Activated CD4-positive, alpha-beta T cell treated with anti-CD3 and anti-CD28 coated beads for 36 hours (primary cell): ENCODE measurements at regions of chr10 and their contacts with region 1.

Region 1: GRCh38 chr10:61896854-61897661 is 4.4 kb upstream of the ARID5B start:
- DNase-seq: peak; percentile 70
- ATAC-seq: peak; percentile 79
- H3K4me3 Mint-ChIP-seq: peak overlapping the region; percentile 94
- H3K27ac Mint-ChIP-seq: peak overlapping the region; percentile 93
- H3K4me1 Mint-ChIP-seq: peaks cover 39% of the 10 kb centered on the region
- H3K27me3 Mint-ChIP-seq: no peaks in the 10 kb centered on the region

Region 2: DNA sequence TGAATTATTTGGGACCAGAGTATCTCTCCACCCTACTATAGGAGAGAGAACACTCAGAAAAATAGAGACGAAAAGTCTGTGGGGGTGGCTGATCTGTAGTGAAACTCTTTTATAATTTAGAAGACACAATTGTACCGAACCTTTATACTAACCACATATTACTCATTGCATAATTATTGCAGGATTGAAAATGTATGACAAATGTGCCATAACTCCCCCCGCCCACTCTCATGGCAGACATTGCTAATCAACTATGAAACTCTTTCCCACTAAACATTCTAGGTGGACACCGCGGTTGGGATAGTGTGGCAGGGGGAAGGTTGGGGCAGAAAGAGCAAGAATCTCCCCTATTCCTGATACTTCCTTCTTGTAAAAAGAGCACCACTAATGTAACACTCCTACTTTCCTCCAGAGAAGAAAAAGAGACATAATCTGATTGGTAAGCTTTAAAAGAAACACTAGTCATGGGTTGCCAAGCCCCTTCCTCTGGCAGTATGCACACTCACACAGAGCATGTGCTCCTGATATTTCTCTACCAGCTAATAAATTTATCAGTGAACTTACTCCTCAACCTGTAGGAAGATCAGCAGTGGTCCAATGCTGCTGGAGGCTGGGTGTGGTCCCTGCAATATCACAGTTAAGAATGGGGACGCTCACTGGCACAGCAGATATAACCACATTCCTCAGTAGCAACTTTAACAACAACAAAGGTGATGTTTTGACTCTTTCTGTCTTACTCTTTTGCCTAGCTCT is 14.3 kb before region 1 on chr10:
- CTCF ChIA-PET with region 1: interaction called, 8 read pairs
- POLR2A ChIA-PET with region 1: interaction called, 4 read pairs
- intact Hi-C with region 1: loop called in 1 of 2 experiments (anchors 2 kb)
- DNase-seq: peak; percentile 86
- ATAC-seq: peak; percentile 96
- H3K4me3 Mint-ChIP-seq: no peak overlapping the region
- H3K27ac Mint-ChIP-seq: peak overlapping the region; percentile 87
- H3K4me1 Mint-ChIP-seq: peaks cover 31% of the 10 kb centered on the region
- H3K27me3 Mint-ChIP-seq: no peaks in the 10 kb centered on the region

Region 3: DNA sequence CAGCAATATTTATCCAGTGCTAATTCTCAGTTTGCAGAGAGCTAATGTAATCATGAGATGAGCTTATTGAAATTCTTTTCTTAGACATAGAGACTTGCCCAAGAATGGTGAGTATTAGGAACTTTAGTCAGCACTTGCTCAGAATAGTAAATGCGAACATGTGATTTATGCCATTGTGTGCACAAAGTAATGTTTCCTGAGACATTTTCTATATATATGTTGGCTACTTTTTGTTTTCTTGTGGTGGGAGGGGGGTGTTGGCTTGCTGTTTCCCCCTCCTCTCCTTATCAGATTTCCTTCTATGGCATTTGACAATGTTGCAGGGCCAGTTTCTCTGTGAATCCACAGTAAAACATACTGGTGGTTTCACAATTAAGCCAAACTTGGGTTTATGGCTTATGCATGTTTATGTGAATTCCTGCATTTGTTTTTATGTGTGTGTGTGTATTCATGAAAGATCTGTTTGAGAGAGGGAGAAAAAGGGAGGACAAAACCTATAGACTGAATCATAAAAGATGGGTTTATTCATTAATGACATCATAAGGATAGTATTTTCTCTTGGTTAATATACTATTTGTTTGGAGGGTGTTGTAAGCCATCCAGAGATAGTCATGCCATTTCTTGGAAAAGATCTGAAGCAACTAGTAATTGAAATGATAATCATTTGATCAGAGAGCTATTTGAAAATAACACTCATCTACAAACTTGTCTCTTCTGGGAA is 40.7 kb after region 1 on chr10:
- CTCF ChIA-PET with region 1: interaction called, 7 read pairs
- POLR2A ChIA-PET with region 1: interaction called, 21 read pairs
- intact Hi-C with region 1: no loop called
- DNase-seq: no peak
- ATAC-seq: peak; percentile 62
- H3K4me3 Mint-ChIP-seq: peak overlapping the region; percentile 41
- H3K27ac Mint-ChIP-seq: peak overlapping the region; percentile 92
- H3K4me1 Mint-ChIP-seq: peaks cover 94% of the 10 kb centered on the region
- H3K27me3 Mint-ChIP-seq: no peaks in the 10 kb centered on the region